MCF 10A (cell line): ENCODE measurements at regions of chr3 and their contacts with region 1.

Region 1: DNA sequence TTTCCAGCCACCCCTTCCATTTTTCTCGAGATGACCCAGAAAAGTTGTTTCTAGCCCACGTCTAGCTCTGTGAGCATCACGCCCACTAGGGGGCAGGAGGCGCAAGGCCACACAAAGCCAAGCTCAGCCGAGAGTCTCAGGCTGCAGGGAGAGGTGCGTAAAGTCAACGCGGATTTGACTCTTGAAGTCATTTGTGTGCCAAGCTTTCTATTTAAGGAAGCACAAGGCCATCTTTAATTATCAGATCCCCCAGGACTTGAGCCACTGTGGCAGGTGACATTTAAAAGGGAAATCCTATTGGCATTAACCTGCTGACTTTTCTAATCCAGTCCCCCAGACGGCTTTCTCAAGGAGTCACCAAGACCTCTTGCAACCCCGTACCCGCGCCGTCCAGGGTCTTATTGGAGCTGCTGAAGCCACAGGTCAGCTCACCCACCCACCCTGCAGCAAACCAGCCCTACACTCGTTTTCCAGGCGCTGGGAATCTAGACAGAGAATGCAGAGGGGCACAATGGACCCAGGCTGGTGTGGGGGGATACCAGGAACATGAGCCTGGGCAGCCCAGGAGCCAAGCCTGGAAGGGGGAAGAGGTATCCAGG is 62.1 kb downstream of the CAPN7 start:
- DNase-seq: peak; percentile 84
- H3K4me3 Mint-ChIP-seq: no peak overlapping the region
- H3K27ac Mint-ChIP-seq: no peak overlapping the region
- H3K4me1 Mint-ChIP-seq: peaks cover 31% of the 10 kb centered on the region
- H3K27me3 Mint-ChIP-seq: no peaks in the 10 kb centered on the region
- CTCF ChIP-seq: peak; percentile 79

Region 2: DNA sequence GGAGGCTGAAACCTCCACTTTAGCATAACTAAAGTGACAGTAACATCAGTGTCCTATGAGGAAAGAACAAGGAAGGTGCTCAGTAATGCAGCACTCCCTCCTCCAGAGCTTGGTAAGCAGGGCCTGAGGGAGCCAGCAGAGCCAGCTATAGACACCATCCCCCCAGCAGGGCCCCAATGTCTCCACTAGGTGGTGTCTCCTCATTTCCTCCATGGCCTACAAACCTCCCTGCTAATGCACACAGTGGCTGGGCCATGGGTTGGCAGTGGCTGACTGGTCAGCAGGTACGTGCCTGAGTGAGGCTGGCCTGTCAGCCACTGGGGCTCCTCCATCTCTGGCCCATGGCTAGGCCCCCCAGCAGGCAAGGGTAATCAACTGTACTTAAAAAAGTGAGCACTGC is 216.6 kb before region 1 on chr3:
- CTCF ChIA-PET with region 1: no interaction called
- POLR2A ChIA-PET with region 1: no interaction called
- intact Hi-C with region 1: no loop called
- DNase-seq: peak; percentile 63
- H3K4me3 Mint-ChIP-seq: no peak overlapping the region
- H3K27ac Mint-ChIP-seq: no peak overlapping the region
- H3K4me1 Mint-ChIP-seq: peaks cover 6% of the 10 kb centered on the region
- H3K27me3 Mint-ChIP-seq: no peaks in the 10 kb centered on the region
- CTCF ChIP-seq: peak; percentile 50

Region 3: GRCh38 chr3:15217841-15218267 is 50.3 kb before region 1 on chr3:
- CTCF ChIA-PET with region 1: interaction called, 13 read pairs
- POLR2A ChIA-PET with region 1: no interaction called
- intact Hi-C with region 1: no loop called
- DNase-seq: no peak
- H3K4me3 Mint-ChIP-seq: no peak overlapping the region
- H3K27ac Mint-ChIP-seq: no peak overlapping the region
- H3K4me1 Mint-ChIP-seq: no peaks in the 10 kb centered on the region
- H3K27me3 Mint-ChIP-seq: no peaks in the 10 kb centered on the region
- CTCF ChIP-seq: no peak

Region 4: DNA sequence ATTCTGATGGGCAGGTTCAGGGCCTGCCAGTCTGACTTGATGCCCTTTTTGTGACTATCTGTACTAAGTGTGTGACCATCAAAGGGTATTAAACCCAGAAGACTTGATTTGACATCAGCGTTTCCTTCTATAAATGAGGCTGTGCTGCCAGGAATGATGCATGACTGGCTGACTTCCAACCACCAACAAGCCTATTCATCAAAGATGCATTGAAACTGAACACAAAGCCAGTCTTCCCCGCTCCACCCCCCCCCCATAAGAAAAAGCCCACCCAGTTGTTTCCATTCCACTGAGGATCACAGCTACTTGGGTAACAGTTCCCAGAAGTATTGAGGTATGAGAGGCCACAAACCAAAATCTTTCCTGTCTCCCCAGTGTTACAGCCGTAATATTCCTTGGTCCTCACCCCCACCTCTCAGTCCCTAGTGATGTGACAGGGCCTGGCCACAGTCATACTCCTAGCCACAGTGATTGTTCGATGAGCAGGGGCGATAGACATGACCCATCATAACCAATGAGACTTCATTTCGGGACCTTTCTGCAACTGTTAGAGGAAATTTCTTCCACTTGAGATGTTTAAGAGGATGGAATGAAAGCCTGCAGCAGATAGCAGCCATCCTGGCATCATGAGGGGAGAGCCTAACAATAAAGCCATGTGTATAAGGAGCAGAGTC is 41.7 kb after region 1 on chr3:
- CTCF ChIA-PET with region 1: interaction called, 12 read pairs
- POLR2A ChIA-PET with region 1: interaction called, 3 read pairs
- intact Hi-C with region 1: no loop called
- DNase-seq: no peak
- H3K4me3 Mint-ChIP-seq: no peak overlapping the region
- H3K27ac Mint-ChIP-seq: no peak overlapping the region
- H3K4me1 Mint-ChIP-seq: peaks cover 15% of the 10 kb centered on the region
- H3K27me3 Mint-ChIP-seq: no peaks in the 10 kb centered on the region
- CTCF ChIP-seq: no peak

Region 5: DNA sequence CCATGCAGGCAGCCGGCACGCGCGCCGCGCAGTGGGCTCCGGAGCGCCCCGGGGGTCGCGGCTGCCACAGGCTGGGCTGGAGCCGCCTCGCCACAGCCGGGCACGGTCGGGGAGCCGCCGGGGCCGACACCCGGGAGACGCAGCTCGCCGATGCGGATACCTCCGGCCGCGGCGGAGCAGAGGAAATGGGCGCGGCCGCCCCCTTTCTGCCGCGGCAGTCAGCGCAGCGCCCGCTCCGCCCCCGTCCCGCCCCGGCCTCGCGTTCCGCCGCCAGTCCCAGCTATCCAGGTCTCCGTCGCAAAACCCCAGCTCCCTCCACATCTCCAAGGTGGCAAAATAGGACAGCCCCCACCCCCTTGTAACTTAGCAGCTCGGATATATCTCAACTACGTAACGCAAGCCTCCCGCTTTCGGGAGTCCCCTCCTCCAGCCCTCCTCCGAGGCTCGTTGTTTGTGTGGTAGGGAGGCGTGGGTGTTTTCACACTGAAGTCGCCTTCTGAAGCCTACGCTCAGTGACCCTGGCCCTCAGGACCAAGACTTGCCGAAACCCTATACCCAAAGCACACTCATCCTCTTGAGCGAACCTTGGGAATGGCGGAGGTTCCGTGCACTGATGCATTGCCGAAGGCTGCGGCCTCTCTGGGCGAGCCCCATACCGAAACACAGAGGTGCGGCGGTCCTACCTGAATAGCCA is 64.4 kb after region 1 on chr3 and contains the start of gene SH3BP5:
- CTCF ChIA-PET with region 1: interaction called, 104 read pairs
- POLR2A ChIA-PET with region 1: interaction called, 74 read pairs
- intact Hi-C with region 1: loop called (anchors 1 kb)
- DNase-seq: peak; percentile 63
- H3K4me3 Mint-ChIP-seq: peak within 1 kb of the TSS; percentile 89
- H3K27ac Mint-ChIP-seq: peak within 1 kb of the TSS; percentile 75
- H3K4me1 Mint-ChIP-seq: no peaks in the 10 kb centered on the region
- H3K27me3 Mint-ChIP-seq: no peaks in the 10 kb centered on the region
- CTCF ChIP-seq: peak; percentile 53
- total RNA-seq, gene SH3BP5: 8.4 and 8.8 TPM in 2 replicates

Region 6: DNA sequence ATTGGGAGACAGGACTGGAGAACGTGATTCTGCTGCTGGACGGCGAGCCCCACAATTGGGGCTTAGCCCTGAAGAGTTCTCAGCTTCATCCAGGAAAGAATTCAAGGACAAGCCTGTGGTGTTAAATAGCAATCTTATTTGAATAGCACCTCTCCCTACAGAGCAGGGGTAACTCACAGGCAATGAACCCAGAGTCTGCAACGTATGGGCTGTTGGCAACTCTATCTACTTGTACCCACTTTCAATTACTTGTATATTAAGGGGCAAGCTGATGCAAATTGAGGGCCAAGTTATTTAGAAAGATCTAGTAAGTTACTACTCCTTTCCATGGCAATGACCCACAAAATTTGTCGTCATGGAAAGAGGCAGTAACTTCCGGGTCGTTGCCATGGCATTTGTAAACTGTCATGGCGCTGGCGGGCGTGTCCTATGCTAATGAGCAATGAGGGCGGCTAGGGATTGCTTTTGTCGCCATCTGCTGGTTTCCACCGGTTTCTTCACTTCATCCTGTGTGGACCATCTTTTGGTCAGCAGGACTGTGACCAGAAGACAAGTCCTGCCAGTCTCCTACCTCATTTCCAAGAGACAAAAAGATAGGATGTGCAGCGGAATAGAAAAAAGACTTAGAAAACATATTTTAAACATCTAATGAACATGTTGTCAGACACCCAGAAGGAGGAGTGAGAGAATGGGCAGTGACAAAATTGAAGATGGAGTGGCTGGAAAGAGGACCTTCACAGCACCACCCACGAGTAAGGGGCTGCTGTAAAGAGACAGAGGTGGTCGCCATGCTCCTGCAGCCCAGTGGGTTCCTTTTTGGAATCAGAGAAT is 110.0 kb after region 1 on chr3:
- CTCF ChIA-PET with region 1: interaction called, 183 read pairs
- POLR2A ChIA-PET with region 1: interaction called, 17 read pairs
- intact Hi-C with region 1: loop called (anchors 1 kb)
- DNase-seq: peak; percentile 96
- H3K4me3 Mint-ChIP-seq: no peak overlapping the region
- H3K27ac Mint-ChIP-seq: no peak overlapping the region
- H3K4me1 Mint-ChIP-seq: no peaks in the 10 kb centered on the region
- H3K27me3 Mint-ChIP-seq: no peaks in the 10 kb centered on the region
- CTCF ChIP-seq: peak; percentile 86

Region 7: DNA sequence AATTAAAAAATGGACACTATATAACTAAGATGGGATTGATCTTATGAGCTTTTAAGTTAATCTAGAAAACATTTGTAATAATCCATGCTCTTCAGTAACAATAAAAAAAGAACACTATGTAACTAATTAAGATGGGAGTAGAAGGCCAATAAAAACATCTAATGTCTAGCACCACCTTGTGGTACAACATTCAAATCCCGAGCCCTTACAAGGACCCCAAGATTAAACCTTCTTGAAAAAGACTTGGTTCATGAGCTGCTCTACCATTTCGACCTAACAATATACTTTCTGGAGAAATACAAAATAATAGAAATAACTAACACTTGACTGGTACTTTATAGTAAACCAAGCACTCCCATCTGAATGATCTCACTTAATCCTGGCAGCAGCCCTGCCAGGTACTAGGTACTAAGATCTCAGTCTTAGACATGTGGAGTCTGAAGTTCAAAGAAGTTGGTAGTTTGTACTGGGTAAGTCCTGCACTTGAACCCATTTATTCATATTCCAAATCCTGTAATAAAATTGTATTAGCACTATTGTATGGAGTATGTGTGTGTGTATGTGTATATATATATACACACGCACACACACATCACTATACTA is 137.4 kb after region 1 on chr3:
- CTCF ChIA-PET with region 1: interaction called, 107 read pairs
- POLR2A ChIA-PET with region 1: interaction called, 14 read pairs
- intact Hi-C with region 1: loop called (anchors 1 kb)
- DNase-seq: peak; percentile 59
- H3K4me3 Mint-ChIP-seq: no peak overlapping the region
- H3K27ac Mint-ChIP-seq: no peak overlapping the region
- H3K4me1 Mint-ChIP-seq: no peaks in the 10 kb centered on the region
- H3K27me3 Mint-ChIP-seq: no peaks in the 10 kb centered on the region
- CTCF ChIP-seq: peak; percentile 57